ENCODE measurements at regions of chr6 and their contacts with region 1.

Region 1: DNA sequence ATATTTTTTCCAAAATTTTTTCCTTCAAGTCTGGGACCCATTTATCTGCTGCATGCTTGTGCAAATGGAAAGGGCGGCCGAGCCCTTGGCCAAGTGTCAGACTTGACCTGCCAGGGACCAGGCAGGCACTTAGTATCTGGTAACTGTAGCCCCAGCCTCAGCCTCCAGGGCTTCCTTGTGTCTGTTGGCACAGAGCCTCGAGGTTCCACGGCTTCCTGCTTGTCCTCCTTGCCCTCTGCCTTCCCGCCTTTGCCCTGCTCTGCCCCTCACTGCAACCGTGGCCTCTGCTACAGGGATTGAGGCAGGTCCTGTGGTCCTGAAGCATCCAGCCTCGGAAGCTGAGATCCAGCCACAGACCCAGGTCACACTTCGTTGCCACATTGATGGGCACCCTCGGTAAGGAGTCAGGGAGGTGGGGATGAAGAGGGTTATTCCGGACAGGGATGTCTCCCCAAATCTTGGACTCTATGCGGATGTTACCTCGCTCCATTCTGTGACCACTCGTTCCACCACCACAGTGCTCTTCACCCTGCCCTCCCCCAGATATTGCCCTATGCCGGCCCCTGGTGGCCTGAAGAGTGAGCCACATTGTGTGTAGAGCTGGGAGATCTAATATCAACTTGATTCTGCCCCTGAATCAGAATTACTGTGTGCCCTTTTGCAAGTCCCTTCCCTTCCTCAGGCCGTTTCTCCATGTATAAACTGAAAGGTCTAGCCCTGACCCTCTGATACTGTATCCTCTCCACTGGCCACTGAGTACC is 41.5 kb upstream of the SRF start:
- DNase-seq: peak in 1 of 2 experiments; percentile 44
- H3K4me3 ChIP-seq: no peak overlapping the region
- H3K4me3 Mint-ChIP-seq: no peak overlapping the region
- H3K27ac Mint-ChIP-seq: peak overlapping the region; percentile 30
- H3K4me1 ChIP-seq: no peaks in the 10 kb centered on the region
- H3K4me1 Mint-ChIP-seq: no peaks in the 10 kb centered on the region
- H3K27me3 ChIP-seq: no peaks in the 10 kb centered on the region
- H3K27me3 Mint-ChIP-seq: no peaks in the 10 kb centered on the region
- CTCF ChIP-seq: peak; percentile 50 to 68

Region 2: DNA sequence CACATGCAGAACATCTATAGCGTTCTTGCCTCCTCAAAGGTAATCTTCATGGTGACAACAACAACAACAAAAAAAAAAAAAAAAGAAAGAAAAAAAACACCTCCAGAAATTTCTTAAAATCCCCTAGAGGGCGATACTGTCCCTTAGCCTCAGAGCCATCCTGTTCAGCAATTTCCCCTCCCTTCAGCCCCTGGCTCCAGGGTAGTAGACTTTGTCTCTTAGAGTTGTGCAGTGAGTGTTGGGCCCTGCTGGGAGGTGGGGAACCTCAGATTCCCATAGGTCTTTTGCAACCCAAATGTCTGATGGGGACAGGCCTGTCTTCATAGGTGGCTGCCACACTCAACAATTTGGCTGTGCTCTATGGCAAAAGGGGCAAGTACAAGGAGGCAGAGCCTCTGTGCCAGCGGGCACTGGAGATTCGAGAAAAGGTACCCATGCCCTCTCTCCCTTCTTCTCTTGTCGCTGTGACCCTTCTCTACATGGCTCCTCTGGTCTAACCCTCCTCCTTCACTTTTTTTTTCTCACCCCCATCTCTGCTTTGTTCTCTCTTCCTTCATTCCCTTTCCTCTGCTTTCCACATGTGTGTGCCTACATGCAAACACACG is 59.5 kb before region 1 on chr6:
- CTCF ChIA-PET with region 1: no interaction called
- POLR2A ChIA-PET with region 1: no interaction called
- intact Hi-C with region 1: loop called (anchors 1 kb)
- DNase-seq: peak; percentile 59 to 64
- H3K4me3 ChIP-seq: no peak overlapping the region
- H3K4me3 Mint-ChIP-seq: no peak overlapping the region
- H3K27ac Mint-ChIP-seq: no peak overlapping the region
- H3K4me1 ChIP-seq: peaks cover 5% of the 10 kb centered on the region; the same call in 1 of the 2 replicates
- H3K4me1 Mint-ChIP-seq: peaks cover 7% of the 10 kb centered on the region
- H3K27me3 ChIP-seq: no peaks in the 10 kb centered on the region
- H3K27me3 Mint-ChIP-seq: no peaks in the 10 kb centered on the region
- CTCF ChIP-seq: peak; percentile 62 to 66

Measured in Caco-2 (cell line).